ENCODE measurements at regions of chr19 and their contacts with region 1.

Region 1: DNA sequence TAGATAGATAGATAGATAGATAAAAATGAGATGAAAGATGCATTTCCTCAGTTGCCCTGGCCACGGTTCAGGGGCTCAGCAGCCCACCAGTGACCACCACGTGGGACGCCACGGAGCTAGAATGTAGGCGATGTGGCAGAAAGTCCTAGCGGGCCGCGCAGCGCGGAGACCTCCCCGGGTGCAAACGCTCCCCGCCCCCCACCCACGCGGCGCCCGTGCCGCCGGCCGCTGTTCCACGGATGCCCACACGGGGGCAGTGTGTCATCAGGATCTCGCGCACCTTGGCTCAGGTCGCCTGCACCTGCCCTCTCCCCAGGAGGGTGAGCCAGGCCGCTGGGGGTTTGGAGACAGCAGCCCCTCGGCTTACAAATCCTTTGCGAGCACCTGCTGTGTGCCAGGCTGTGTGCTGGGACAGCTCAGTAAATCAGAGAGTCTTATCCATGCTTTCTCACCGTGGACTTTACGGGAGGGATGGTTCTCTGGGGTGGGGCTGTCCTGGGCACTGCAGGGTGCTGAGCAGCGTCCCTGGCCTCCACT is 13.7 kb upstream of the TLE5 start:
- DNase-seq: peak; percentile 85
- H3K4me3 Mint-ChIP-seq: no peak overlapping the region
- H3K27ac Mint-ChIP-seq: no peak overlapping the region
- H3K4me1 Mint-ChIP-seq: peaks cover 4% of the 10 kb centered on the region
- H3K27me3 Mint-ChIP-seq: no peaks in the 10 kb centered on the region

Region 2: DNA sequence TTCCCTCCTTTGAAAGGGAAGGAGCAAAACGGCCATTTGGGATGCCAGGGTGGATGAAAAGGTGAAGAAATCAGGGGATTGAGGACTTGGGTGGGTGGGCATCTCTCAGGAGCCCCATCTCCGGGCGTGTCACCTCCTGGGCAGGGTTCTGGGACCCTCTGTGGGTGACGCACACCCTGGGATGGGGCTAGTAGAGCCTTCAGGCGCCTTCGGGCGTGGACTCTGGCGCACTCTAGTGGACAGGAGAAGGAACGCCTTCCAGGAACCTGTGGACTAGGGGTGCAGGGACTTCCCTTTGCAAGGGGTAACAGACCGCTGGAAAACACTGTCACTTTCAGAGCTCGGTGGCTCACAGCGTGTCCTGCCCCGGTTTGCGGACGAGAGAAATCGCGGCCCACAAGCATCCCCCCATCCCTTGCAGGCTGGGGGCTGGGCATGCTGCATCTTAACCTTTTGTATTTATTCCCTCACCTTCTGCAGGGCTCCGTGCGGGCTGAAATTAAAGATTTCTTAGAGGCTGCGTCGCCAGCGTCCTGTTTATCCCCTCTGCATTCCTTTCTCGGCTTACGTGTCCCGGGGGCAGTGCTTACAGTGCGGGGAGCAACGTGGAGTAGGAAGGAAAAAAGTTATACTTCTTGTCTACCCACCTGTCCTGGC is 87.4 kb after region 1 on chr19:
- CTCF ChIA-PET with region 1: interaction called, 9 read pairs
- POLR2A ChIA-PET with region 1: no interaction called
- intact Hi-C with region 1: loop called (anchors 5 kb)
- DNase-seq: peak; percentile 78
- H3K4me3 Mint-ChIP-seq: no peak overlapping the region
- H3K27ac Mint-ChIP-seq: peak overlapping the region; percentile 20
- H3K4me1 Mint-ChIP-seq: peaks cover 20% of the 10 kb centered on the region
- H3K27me3 Mint-ChIP-seq: no peaks in the 10 kb centered on the region

Measured in activated CD4-positive, alpha-beta memory T cell treated with anti-CD3 and anti-CD28 coated beads for 36 hours (primary cell).